Activated T-helper 2 cell treated with anti-CD3 and anti-CD28 coated beads, Interferon-gamma antibody, Interleukin-2, Interleukin-4, amounts not matched to agents 10 μg/mL and 5 μg/mL and 100 μg/mL, durations not matched to agents 14 hours and 24 hours and 36 hours (primary cell): ENCODE measurements at regions of chr7 and their contacts with region 1.

Region 1: GRCh38 chr7:159049266-159050025 is 95.2 kb downstream of the VIPR2 start:
- DNase-seq: no peak
- H3K4me3 Mint-ChIP-seq: no peak overlapping the region
- H3K27ac Mint-ChIP-seq: peak overlapping the region; percentile 50
- H3K4me1 Mint-ChIP-seq: peaks cover 47% of the 10 kb centered on the region
- H3K27me3 Mint-ChIP-seq: no peaks in the 10 kb centered on the region

Region 2: DNA sequence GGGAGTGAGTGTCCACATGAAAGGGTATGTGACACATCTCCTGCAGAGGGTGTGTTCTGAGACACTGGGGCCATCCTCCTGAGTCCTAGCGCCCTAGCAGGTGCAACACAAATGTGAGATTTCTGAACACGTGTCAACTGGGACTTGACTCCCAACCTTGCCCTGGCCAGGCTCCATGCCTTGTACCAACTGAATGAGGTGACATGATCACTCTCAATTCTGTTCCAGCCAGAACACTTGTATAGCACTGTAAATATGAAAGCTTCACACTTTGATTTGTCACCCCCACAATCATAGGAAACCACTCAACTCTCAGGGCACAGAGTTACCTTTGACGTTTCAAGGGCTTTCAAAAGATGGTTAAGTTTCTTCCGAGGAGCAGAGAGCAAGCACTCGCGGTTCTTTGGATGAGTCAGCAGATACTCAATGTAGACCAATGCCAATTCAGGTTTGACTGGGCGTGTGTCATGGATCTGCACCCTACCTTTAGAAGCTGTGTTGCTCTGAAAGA is 393.5 kb before region 1 on chr7:
- intact Hi-C with region 1: loop called (anchors 2 kb)
- DNase-seq: peak; percentile 66
- H3K4me3 Mint-ChIP-seq: no peak overlapping the region
- H3K27ac Mint-ChIP-seq: peak overlapping the region; percentile 88
- H3K4me1 Mint-ChIP-seq: peaks cover 31% of the 10 kb centered on the region
- H3K27me3 Mint-ChIP-seq: no peaks in the 10 kb centered on the region

Region 3: GRCh38 chr7:159004411-159004810 is 45.0 kb before region 1 on chr7:
- intact Hi-C with region 1: loop called (anchors 1 kb)
- DNase-seq: no peak
- H3K4me3 Mint-ChIP-seq: peak overlapping the region; percentile 14
- H3K27ac Mint-ChIP-seq: peak overlapping the region; percentile 85
- H3K4me1 Mint-ChIP-seq: peaks cover 20% of the 10 kb centered on the region
- H3K27me3 Mint-ChIP-seq: no peaks in the 10 kb centered on the region

Region 4: DNA sequence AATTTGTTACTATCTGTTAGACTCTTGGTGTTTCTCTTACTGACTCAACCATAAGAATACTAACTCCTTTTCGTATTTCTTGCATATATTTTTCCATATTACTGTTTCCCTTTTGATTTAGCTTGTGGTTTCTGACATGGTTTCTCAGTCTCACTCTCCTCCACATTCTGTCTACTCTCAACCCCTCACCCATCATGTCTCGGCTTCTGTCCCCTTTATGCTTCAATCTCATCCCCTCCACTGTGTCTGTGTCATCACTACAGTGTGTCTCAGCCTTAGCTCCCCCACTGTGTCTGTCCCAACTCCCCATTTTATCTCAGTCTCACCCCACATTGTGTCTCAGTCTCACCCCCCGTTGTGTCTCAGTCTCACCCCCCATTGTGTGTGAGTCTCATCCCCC is 31.7 kb before region 1 on chr7:
- intact Hi-C with region 1: loop called (anchors 1 kb)
- DNase-seq: no peak
- H3K4me3 Mint-ChIP-seq: no peak overlapping the region
- H3K27ac Mint-ChIP-seq: peak overlapping the region; percentile 35
- H3K4me1 Mint-ChIP-seq: peaks cover 20% of the 10 kb centered on the region
- H3K27me3 Mint-ChIP-seq: peaks cover 7% of the 10 kb centered on the region

Region 5: GRCh38 chr7:159143780-159144757 is 94.6 kb after region 1 on chr7:
- intact Hi-C with region 1: loop called (anchors 5 kb)
- DNase-seq: peak; percentile 19
- H3K4me3 Mint-ChIP-seq: peak overlapping the region; percentile 75
- H3K27ac Mint-ChIP-seq: no peak overlapping the region
- H3K4me1 Mint-ChIP-seq: peaks cover 10% of the 10 kb centered on the region
- H3K27me3 Mint-ChIP-seq: peaks cover 31% of the 10 kb centered on the region

Region 6: GRCh38 chr7:159197066-159197975 is 147.9 kb after region 1 on chr7:
- intact Hi-C with region 1: loop called (anchors 2 kb)
- DNase-seq: peak; percentile 55
- H3K4me3 Mint-ChIP-seq: peak overlapping the region; percentile 78
- H3K27ac Mint-ChIP-seq: peak overlapping the region; percentile 97
- H3K4me1 Mint-ChIP-seq: peaks cover 35% of the 10 kb centered on the region
- H3K27me3 Mint-ChIP-seq: no peaks in the 10 kb centered on the region